ENCODE measurements at regions of chr1 and their contacts with region 1.

Region 1: DNA sequence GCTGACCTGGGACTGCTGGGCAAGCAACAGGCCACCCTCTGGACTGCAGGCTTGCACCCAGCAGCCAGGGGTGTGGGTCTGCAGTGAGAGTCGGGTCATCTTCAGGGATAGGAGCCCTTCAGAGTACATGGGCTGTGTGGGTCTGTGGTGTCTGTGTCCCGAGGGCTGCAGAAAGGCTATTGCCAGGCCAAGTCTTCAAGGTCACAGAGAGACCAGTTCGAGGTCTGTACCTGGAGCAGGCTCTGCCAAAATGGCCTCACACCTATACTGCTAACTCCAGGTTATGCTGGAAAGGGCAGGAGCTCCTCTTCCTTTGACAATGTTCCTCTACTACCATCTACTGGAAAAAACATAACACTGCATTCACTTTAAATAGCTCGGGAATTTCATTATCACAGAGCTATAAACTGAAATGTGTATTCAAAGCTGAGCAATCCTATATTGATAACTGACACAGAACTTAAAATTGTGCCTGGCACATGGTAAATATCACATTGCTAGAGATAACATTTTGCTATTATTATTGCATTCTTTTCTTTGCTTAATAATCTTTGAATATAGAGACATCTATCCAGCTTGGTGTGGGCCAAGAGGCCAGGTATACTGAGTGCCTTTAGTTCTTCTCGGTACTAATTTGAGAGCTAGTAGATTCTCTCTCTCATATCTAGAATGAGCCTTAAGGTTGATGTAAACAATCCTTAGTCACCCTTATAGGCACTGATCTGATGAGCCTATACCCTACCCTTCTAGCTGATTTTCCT is 6.9 kb upstream of the DNAH14 start:
- H3K4me3 Mint-ChIP-seq: no peak overlapping the region
- H3K27ac Mint-ChIP-seq: no peak overlapping the region
- H3K4me1 Mint-ChIP-seq: no peaks in the 10 kb centered on the region
- H3K27me3 Mint-ChIP-seq: peaks cover 2% of the 10 kb centered on the region

Region 2: GRCh38 chr1:224519874-224520273 is 402.7 kb before region 1 on chr1:
- intact Hi-C with region 1: loop called (anchors 5 kb)
- H3K4me3 Mint-ChIP-seq: no peak overlapping the region
- H3K27ac Mint-ChIP-seq: no peak overlapping the region
- H3K4me1 Mint-ChIP-seq: peaks cover 7% of the 10 kb centered on the region
- H3K27me3 Mint-ChIP-seq: no peaks in the 10 kb centered on the region

Region 3: GRCh38 chr1:224623743-224624333 is 298.7 kb before region 1 on chr1:
- intact Hi-C with region 1: no loop called
- H3K4me3 Mint-ChIP-seq: no peak overlapping the region
- H3K27ac Mint-ChIP-seq: no peak overlapping the region
- H3K4me1 Mint-ChIP-seq: peaks cover 18% of the 10 kb centered on the region
- H3K27me3 Mint-ChIP-seq: peaks cover 45% of the 10 kb centered on the region

Measured in dendritic cell treated with granulocyte-macrophage colony-stimulating factor and Interleukin-4, amounts not matched to agents 40 ng/mL and 50 ng/mL, for 4 days (primary cell).